MCF 10A (cell line): ENCODE measurements at regions of chr4 and their contacts with region 1.

Region 1: GRCh38 chr4:137226898-137227297 is 305.4 kb downstream of the PCDH18 start:
- DNase-seq: peak; percentile 49
- H3K4me3 Mint-ChIP-seq: no peak overlapping the region
- H3K27ac Mint-ChIP-seq: no peak overlapping the region
- H3K4me1 Mint-ChIP-seq: no peaks in the 10 kb centered on the region
- H3K27me3 Mint-ChIP-seq: no peaks in the 10 kb centered on the region
- CTCF ChIP-seq: peak; percentile 34

Region 2: GRCh38 chr4:137015426-137016409 is 211.2 kb before region 1 on chr4:
- CTCF ChIA-PET with region 1: no interaction called
- POLR2A ChIA-PET with region 1: no interaction called
- intact Hi-C with region 1: no loop called
- DNase-seq: no peak
- H3K4me3 Mint-ChIP-seq: no peak overlapping the region
- H3K27ac Mint-ChIP-seq: no peak overlapping the region
- H3K4me1 Mint-ChIP-seq: peaks cover 5% of the 10 kb centered on the region
- H3K27me3 Mint-ChIP-seq: no peaks in the 10 kb centered on the region
- CTCF ChIP-seq: no peak

Region 3: DNA sequence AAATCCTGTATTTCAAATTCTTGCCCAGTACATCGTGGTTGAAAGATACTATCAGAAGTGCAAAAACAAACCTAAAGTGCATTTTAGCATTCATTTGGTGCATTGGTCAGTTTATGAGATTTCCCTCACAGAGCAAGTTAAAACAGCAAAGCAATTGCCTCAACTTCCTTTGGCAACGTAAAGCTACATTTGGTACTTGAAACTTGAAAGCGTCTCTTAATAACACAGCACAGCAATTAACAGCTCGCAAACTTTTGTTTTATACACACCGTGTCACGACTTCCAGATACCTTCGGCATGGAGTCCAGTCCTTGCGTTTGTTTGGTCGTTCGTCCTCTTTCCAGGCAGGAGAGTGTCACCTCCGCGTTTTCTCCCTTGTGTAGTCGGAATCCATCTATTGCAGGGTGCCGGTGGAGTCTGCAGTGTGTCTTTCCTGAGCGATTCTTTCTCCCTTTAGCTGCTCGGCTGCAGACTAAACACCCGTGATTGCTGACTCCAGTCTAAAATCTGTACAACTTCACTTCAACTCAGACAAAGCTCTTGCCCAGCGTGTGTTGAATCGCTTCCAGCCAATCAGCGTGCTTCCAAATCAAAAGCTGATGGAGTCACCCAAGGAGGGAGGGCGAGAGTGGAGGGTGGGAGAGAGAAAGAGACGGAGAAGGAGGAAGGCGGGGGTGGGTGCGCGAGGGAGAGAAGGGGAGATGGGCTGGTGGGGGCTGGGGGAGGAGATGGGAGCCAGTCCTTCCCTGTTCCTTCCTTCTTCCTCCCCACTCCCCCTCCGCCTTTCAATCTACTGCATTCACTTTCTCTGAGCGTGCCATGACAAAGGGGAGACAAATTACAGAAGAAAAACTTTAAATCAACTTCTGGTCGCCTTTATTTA is 305.3 kb after region 1 on chr4 and contains the start of gene PCDH18:
- CTCF ChIA-PET with region 1: interaction called, 3 read pairs
- POLR2A ChIA-PET with region 1: no interaction called
- intact Hi-C with region 1: loop called (anchors 5 kb)
- DNase-seq: peak; percentile 64
- H3K4me3 Mint-ChIP-seq: no peak within 1 kb of the TSS
- H3K27ac Mint-ChIP-seq: no peak within 1 kb of the TSS
- H3K4me1 Mint-ChIP-seq: no peaks in the 10 kb centered on the region
- H3K27me3 Mint-ChIP-seq: no peaks in the 10 kb centered on the region
- CTCF ChIP-seq: no peak
- total RNA-seq, gene PCDH18: 3.5 and 4.9 TPM in 2 replicates